HEK293T (cell line): ENCODE measurements at regions of chr1 and their contacts with region 1.

Region 1: DNA sequence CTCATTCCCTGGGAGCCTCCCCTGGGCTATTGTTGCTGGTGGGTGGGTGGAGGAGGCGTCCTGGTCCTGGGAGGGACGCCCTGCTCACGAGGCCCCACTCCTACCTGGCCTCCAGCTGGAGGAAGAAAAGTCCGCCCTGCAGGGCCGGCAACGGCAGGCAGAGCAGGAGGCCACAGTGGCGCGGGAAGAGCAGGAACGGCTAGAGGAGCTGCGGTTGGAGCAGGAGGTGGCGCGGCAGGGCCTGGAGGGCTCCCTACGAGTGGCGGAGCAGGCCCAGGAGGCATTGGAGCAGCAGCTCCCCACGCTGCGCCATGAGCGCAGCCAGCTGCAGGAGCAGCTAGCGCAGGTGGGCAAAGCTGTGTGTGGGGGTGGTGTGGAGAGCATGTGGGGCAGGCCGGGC is 24.9 kb downstream of the CROCC start:
- DNase-seq: no peak

Region 2: GRCh38 chr1:16960560-16961296 is 14.1 kb after region 1 on chr1:
- CTCF ChIA-PET with region 1: interaction called, 18 read pairs
- POLR2A ChIA-PET with region 1: interaction called, 6 read pairs
- DNase-seq: peak; percentile 76

Region 3: DNA sequence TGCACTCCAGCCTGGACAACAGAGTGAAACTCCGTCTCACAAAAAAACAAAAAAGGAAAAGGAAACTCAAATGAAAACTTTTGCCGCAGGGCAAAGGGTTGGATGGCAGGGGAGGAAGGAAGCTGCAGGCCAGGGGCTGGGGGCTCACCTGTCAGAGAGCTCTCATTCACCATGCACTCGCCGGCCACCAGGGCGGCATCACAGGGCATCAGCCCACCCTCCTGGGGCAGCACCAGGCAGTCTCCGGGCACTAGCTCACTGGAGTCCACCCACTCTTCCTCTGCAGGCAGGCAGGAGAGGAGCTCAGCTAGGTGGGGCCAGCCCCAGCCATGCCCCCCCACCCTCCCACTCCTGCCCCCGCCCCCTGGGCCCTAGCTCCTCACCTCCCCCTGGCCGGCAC is 53.2 kb after region 1 on chr1:
- CTCF ChIA-PET with region 1: no interaction called
- POLR2A ChIA-PET with region 1: no interaction called
- DNase-seq: no peak